H1 (cell line): ENCODE measurements at regions of chr6 and their contacts with region 1.

Region 1: GRCh38 chr6:150685860-150686259 is 86.2 kb downstream of the PLEKHG1 start:
- DNase-seq: peak; percentile 64 to 89
- H3K4me3 ChIP-seq: no peak overlapping the region
- H3K27ac ChIP-seq: no peak overlapping the region
- H3K4me1 ChIP-seq: no peaks in the 10 kb centered on the region
- H3K27me3 ChIP-seq: no peaks in the 10 kb centered on the region
- CTCF ChIP-seq: peak; percentile 85 to 99 (median 99)
- EP300 ChIP-seq: no peak
- POLR2A ChIP-seq: no peak
- RAD21 ChIP-seq: peak; percentile 77 to 87

Region 2: GRCh38 chr6:150659046-150659763 is 26.7 kb before region 1 on chr6:
- CTCF ChIA-PET with region 1: interaction called, 10 read pairs
- POLR2A ChIA-PET with region 1: no interaction called
- DNase-seq: no peak
- H3K4me3 ChIP-seq: no peak overlapping the region
- H3K27ac ChIP-seq: no peak overlapping the region
- H3K4me1 ChIP-seq: no peaks in the 10 kb centered on the region
- H3K27me3 ChIP-seq: no peaks in the 10 kb centered on the region
- CTCF ChIP-seq: no peak
- EP300 ChIP-seq: no peak
- POLR2A ChIP-seq: no peak
- RAD21 ChIP-seq: no peak

Region 3: DNA sequence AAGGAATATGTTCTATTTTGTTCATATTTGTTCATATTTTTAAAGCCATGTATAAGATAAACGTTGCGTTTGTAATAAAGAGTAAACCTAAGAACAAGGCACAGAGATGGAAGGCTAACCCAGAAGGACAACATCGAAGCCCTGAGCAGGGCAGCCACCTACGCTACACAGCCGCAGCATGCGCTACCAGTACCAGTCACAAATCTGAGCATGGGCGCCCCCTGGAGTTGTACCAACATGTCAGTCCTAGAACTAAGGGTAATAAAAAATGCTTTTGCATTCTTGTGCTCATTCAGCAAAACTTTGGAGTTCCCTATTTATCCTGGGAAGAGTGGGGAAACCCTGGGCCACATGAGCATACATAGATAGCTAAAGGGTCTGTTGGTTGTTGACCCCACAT is 15.5 kb before region 1 on chr6:
- CTCF ChIA-PET with region 1: interaction called, 40 read pairs
- POLR2A ChIA-PET with region 1: no interaction called
- DNase-seq: no peak
- H3K4me3 ChIP-seq: no peak overlapping the region
- H3K27ac ChIP-seq: no peak overlapping the region
- H3K4me1 ChIP-seq: no peaks in the 10 kb centered on the region
- H3K27me3 ChIP-seq: no peaks in the 10 kb centered on the region
- CTCF ChIP-seq: peak in 2 of 3 experiments; percentile 21 to 33; a peak in 2 of 4 replicates
- EP300 ChIP-seq: no peak
- POLR2A ChIP-seq: no peak
- RAD21 ChIP-seq: peak; percentile 23 to 44

Region 4: DNA sequence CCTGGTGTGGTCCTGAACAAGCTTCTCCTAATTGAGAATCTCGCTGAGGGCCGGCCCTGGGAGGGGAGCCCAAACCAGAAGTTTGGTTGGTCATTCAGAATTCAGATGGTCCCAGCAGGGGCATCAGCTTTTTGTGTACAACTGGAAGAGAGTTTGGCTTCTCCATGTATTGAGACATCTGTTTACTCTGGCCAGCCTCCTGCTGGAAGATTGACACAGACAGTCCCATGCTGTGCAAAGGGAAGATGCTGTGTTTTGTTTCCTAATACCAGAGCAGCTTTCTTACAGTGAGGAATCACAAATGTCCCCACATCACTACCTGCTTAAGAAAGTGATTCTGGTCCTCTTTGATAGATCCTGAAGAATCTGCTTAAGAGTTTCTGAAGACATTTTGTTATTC is 11.7 kb after region 1 on chr6:
- CTCF ChIA-PET with region 1: interaction called, 29 read pairs
- POLR2A ChIA-PET with region 1: no interaction called
- DNase-seq: no peak
- H3K4me3 ChIP-seq: no peak overlapping the region
- H3K27ac ChIP-seq: no peak overlapping the region
- H3K4me1 ChIP-seq: no peaks in the 10 kb centered on the region
- H3K27me3 ChIP-seq: no peaks in the 10 kb centered on the region; a peak in 1 of 7 replicates
- CTCF ChIP-seq: no peak
- EP300 ChIP-seq: no peak
- POLR2A ChIP-seq: no peak
- RAD21 ChIP-seq: no peak

Region 5: DNA sequence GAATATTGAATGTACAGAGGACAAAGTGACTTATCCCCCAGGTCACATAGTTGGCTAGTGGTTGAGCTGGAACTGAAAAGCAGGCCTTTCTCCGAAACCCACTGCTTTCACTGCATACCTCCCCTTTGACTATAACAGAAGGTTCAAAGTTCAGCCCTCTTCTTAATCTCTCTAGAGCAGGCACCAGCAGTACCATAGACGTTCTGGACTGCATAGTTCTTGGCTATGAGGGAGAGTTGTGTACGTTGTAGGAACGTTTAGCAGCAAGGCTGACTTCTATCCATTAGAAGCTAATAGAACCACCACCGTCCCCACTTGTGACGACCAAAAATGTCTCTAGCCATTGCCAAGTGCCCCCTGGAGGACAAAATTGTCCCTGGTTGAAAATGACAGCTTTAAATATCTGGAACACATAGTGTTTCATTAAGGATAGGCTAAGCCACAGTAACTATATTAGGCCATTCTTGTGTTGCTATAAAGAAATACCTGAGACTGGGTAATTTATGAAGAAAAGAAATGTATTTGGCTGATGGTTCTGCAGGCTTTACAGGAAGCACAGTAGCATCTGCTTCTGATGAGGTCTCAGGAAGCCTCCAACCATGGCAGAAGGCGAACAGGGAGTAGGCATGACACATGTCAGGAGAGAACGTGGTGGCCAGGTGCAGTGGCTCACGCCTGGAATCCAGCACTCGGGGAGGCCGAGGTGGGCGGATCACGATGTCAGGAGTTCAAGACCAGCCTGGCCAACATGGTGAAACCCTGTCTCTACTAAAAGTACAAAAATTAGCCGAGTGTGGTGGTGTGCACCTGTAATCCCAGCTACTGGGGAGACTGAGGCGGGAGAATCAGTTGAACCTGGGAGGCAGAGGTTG is 56.0 kb after region 1 on chr6:
- CTCF ChIA-PET with region 1: interaction called, 21 read pairs
- POLR2A ChIA-PET with region 1: no interaction called
- DNase-seq: no peak
- H3K4me3 ChIP-seq: no peak overlapping the region
- H3K27ac ChIP-seq: no peak overlapping the region
- H3K4me1 ChIP-seq: no peaks in the 10 kb centered on the region
- H3K27me3 ChIP-seq: no peaks in the 10 kb centered on the region
- CTCF ChIP-seq: peak; percentile 27 to 63 (median 52)
- EP300 ChIP-seq: no peak
- POLR2A ChIP-seq: no peak
- RAD21 ChIP-seq: peak; percentile 63 to 71

Region 6: DNA sequence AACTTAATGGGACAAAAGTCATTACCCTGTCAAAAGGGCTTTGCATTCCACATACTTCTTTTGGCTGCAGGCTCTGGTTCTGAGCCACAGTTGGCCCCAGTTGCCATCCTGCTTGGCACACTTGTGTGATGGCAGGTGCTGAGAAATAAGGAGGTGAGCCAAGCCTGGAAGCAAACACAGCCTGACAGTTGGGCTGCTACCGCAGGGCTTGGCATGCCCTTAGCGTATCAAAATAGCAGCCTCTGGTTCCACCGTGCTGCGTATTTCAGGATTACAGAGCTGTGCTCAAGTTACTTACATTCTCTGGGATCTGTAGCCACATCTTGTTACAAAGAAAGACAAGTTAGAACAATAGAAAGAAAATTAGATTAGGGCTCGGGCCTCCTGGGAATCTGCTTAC is 190.7 kb after region 1 on chr6:
- CTCF ChIA-PET with region 1: no interaction called
- POLR2A ChIA-PET with region 1: no interaction called
- DNase-seq: no peak
- H3K4me3 ChIP-seq: no peak overlapping the region
- H3K27ac ChIP-seq: no peak overlapping the region
- H3K4me1 ChIP-seq: peaks cover 2 to 21% (median 11%) of the 10 kb centered on the region in 4 experiments; a peak in 6 of 7 replicates
- H3K27me3 ChIP-seq: no peaks in the 10 kb centered on the region
- CTCF ChIP-seq: no peak
- EP300 ChIP-seq: no peak
- POLR2A ChIP-seq: no peak
- RAD21 ChIP-seq: no peak